CD4-positive, alpha-beta memory T cell (primary cell): ENCODE measurements at regions of chr6 and their contacts with region 1.

Region 1: DNA sequence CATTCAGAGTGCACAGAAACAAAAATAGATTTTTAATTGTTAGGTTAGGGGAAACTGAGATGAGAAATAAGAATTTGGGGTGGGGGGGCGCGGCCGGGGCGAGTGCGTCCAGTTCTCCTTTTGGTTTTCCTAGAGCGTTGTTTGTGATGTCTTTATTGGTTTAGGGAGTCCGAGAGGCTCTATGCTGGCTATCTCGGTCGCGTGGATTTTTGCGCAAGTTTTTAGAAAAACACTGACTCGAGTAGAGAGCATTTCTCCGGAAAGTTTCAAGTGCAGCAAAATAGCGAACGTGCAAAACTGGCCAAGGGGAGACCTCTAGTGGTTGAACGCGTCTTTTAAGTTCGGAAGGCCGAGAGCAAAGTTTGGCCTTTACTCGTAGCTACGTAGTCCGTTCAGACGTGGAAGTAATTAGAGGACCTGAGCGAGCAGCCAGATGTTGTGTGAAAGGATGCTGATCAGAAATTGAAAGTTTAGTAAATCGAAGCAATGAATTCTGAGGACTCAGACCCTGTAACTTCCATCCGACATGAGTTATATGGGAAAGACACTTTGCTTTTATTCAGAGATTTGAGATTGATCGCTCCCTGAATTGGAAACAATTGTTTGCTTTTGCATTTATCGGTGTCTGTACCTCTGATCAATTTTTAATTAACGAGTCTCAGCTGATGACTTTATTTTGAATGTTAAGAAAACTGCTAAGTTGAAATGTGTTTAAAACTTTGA is 2.7 kb downstream of the L3MBTL3 start:
- DNase-seq: peak; percentile 80 to 84 (median 82)
- H3K4me3 ChIP-seq: peak overlapping the region; percentile 49 to 54
- H3K4me3 Mint-ChIP-seq: peak overlapping the region; percentile 97 to 99 (median 98)
- H3K27ac ChIP-seq: peak overlapping the region; percentile 72
- H3K27ac Mint-ChIP-seq: peak overlapping the region; percentile 94 to 98 (median 97)
- H3K4me1 ChIP-seq: peaks cover 18% of the 10 kb centered on the region
- H3K4me1 Mint-ChIP-seq: peaks cover 23 to 55% (median 27%) of the 10 kb centered on the region in 4 donors
- H3K27me3 ChIP-seq: no peaks in the 10 kb centered on the region
- H3K27me3 Mint-ChIP-seq: peaks cover 0 to 2% of the 10 kb centered on the region in 2 donors

Region 2: GRCh38 chr6:129498950-129499842 is 521.9 kb before region 1 on chr6:
- CTCF ChIA-PET with region 1: interaction called, 5 read pairs
- POLR2A ChIA-PET with region 1: no interaction called
- intact Hi-C with region 1: loop called (anchors 2 kb)
- DNase-seq: peak; percentile 29 to 62 (median 55)
- H3K4me3 ChIP-seq: no peak overlapping the region
- H3K4me3 Mint-ChIP-seq: peak overlapping the region; percentile 37 to 89 (median 76)
- H3K27ac ChIP-seq: no peak overlapping the region
- H3K27ac Mint-ChIP-seq: peak overlapping the region in 5 of 7 donors; percentile 1 to 50 (median 19)
- H3K4me1 ChIP-seq: peaks cover 21% of the 10 kb centered on the region
- H3K4me1 Mint-ChIP-seq: peaks cover 15 to 24% (median 19%) of the 10 kb centered on the region in 4 donors
- H3K27me3 ChIP-seq: no peaks in the 10 kb centered on the region
- H3K27me3 Mint-ChIP-seq: no peaks in the 10 kb centered on the region

Region 3: DNA sequence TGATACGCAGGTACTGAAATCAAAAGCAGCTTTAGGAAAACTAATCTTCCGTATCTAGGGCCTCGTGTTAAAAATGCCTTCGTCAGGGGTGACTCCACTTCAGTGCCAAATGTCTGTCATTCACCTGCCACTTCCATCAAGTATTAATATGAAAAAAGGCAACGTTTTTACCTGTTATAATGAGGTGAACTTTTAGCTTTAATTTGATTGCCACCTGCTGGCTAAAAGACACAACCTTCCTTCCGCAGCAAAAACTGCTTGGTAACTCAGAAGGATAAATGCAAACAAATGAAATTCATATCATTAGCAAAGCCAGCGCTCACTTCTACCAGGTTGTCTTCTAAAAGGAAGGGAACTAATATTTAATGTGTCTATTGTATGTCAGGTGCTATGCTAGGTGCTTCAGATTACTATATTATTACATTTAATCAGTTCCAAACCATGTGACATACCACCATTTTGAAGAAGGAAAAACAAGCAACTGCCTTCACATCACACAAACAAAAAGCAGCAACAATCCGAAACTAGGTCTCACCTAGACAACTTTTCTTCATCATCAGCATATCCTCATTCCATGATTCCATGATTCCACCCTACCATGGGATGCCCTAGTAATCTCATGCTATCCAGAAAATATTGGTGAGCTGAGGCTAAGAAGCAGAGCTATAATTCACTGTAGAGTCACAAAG is 290.4 kb before region 1 on chr6:
- CTCF ChIA-PET with region 1: interaction called, 7 read pairs
- POLR2A ChIA-PET with region 1: interaction called, 3 read pairs
- intact Hi-C with region 1: loop called (anchors 1 kb)
- DNase-seq: peak; percentile 38 to 61 (median 56)
- H3K4me3 ChIP-seq: no peak overlapping the region
- H3K4me3 Mint-ChIP-seq: no peak overlapping the region
- H3K27ac ChIP-seq: no peak overlapping the region
- H3K27ac Mint-ChIP-seq: peak overlapping the region in 4 of 7 donors; percentile 16 to 73 (median 54)
- H3K4me1 ChIP-seq: peaks cover 13% of the 10 kb centered on the region
- H3K4me1 Mint-ChIP-seq: peaks cover 6 to 11% (median 9%) of the 10 kb centered on the region in 4 donors
- H3K27me3 ChIP-seq: no peaks in the 10 kb centered on the region
- H3K27me3 Mint-ChIP-seq: no peaks in the 10 kb centered on the region

Region 4: GRCh38 chr6:129774697-129775447 is 246.2 kb before region 1 on chr6:
- CTCF ChIA-PET with region 1: interaction called, 20 read pairs
- POLR2A ChIA-PET with region 1: no interaction called
- intact Hi-C with region 1: no loop called
- DNase-seq: peak; percentile 27 to 44 (median 32)
- H3K4me3 ChIP-seq: no peak overlapping the region
- H3K4me3 Mint-ChIP-seq: no peak overlapping the region
- H3K27ac ChIP-seq: no peak overlapping the region
- H3K27ac Mint-ChIP-seq: no peak overlapping the region
- H3K4me1 ChIP-seq: no peaks in the 10 kb centered on the region
- H3K4me1 Mint-ChIP-seq: no peaks in the 10 kb centered on the region
- H3K27me3 ChIP-seq: no peaks in the 10 kb centered on the region
- H3K27me3 Mint-ChIP-seq: no peaks in the 10 kb centered on the region

Region 5: DNA sequence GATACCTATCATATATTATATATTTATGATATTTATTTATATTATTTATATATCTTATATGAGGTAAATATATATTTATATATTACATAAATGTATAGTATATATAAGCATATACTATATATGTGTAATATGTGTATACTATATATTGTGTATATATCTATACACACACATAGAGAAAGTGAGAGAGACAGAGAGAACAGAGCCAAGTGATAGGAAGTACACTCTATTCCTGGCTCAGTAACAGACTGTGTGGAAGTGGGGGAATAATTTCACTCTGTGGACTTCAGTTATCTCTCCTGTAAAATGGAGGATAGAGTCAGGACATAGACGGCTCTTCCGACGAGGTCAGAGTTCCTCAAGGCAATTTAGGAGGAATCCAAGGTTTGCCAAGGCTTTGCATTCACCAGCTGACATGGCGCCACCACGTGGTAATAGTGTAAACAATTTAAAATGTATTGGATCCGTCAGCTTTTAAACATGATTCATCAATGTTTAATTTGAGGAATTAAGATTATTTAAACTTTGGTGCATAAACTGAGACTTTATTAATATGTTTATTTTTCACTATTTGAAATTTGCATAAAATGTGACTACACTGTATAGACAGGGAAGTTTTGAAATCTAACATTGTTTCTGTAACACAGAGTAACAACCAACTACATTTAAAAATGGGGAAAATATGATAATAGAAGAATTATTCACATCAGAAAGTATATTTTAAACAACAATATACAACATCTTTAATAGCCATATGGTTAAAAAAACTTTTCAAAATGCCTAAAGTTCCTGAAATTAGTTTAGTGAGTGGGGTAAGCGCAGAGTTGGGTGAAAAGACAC is 84.5 kb before region 1 on chr6:
- CTCF ChIA-PET with region 1: interaction called, 13 read pairs
- POLR2A ChIA-PET with region 1: no interaction called
- intact Hi-C with region 1: loop called (anchors 1 kb)
- DNase-seq: peak in 4 of 5 donors; percentile 25 to 39 (median 34)
- H3K4me3 ChIP-seq: no peak overlapping the region
- H3K4me3 Mint-ChIP-seq: peak overlapping the region in 2 of 8 donors; percentile 38 to 79
- H3K27ac ChIP-seq: no peak overlapping the region
- H3K27ac Mint-ChIP-seq: no peak overlapping the region
- H3K4me1 ChIP-seq: no peaks in the 10 kb centered on the region
- H3K4me1 Mint-ChIP-seq: peaks cover 0 to 4% (median 1%) of the 10 kb centered on the region in 4 donors
- H3K27me3 ChIP-seq: peaks cover 4% of the 10 kb centered on the region
- H3K27me3 Mint-ChIP-seq: peaks cover 11 to 15% of the 10 kb centered on the region in 2 donors

Region 6: GRCh38 chr6:130132286-130132701 is 111.2 kb after region 1 on chr6:
- CTCF ChIA-PET with region 1: no interaction called
- POLR2A ChIA-PET with region 1: no interaction called
- intact Hi-C with region 1: loop called (anchors 5 kb)
- DNase-seq: peak; percentile 74 to 91 (median 86)
- H3K4me3 ChIP-seq: peak overlapping the region in 1 of 2 donors; percentile 21
- H3K4me3 Mint-ChIP-seq: peak overlapping the region; percentile 53 to 87 (median 74)
- H3K27ac ChIP-seq: peak overlapping the region; percentile 50
- H3K27ac Mint-ChIP-seq: peak overlapping the region; percentile 82 to 97 (median 96)
- H3K4me1 ChIP-seq: peaks cover 72% of the 10 kb centered on the region
- H3K4me1 Mint-ChIP-seq: peaks cover 66 to 93% (median 73%) of the 10 kb centered on the region in 4 donors
- H3K27me3 ChIP-seq: no peaks in the 10 kb centered on the region
- H3K27me3 Mint-ChIP-seq: no peaks in the 10 kb centered on the region